ENCODE measurements at regions of chr11 and their contacts with region 1.

Region 1: GRCh38 chr11:75142714-75143419 is 8.0 kb upstream of the SLCO2B1 start:
- DNase-seq: peak; percentile 91 to 98 (median 97)
- H3K4me3 ChIP-seq: no peak overlapping the region
- H3K27ac ChIP-seq: no peak overlapping the region
- H3K4me1 ChIP-seq: peaks cover 4 to 29% (median 20%) of the 10 kb centered on the region in 4 experiments
- H3K27me3 ChIP-seq: peaks cover 0 to 4% (median 0%) of the 10 kb centered on the region in 5 experiments

Region 2: DNA sequence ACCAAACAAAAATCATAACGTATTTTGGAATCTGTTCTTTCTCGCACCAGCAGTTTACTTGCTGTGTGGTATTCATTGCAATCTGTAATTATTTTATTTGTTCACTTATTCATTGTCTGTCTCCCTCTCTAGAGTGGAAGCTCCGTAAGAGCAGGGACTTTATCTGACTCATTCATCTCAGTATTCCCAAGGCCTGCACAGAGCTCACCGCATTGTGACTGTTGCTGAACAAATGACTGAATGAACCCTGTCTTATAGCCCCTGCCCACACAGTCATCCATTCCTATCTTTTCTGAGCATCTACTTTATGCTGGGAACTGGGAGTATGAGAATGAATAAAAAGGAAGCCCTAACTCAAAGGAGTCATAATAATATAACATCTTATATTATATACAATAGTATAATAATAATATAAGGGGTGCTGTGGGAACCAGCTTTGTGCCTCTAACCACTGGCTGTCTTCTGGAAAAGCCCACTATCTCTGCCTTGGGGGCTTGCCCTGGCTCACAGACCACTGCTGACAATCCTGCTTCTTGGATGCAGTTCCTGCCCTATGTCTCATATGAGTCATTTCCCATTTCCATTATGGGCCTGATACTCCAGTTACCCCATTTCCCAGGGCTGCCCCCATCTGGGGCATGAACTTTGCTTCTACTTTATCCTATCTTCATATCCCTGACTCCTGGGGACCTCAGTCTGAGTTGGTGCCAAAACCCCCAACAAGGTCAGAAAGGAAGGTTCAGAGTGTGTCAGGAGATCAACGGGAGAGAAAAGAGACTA is 205.0 kb before region 1 on chr11:
- CTCF ChIA-PET with region 1: no interaction called
- POLR2A ChIA-PET with region 1: no interaction called
- DNase-seq: no peak
- H3K4me3 ChIP-seq: no peak overlapping the region
- H3K27ac ChIP-seq: no peak overlapping the region
- H3K4me1 ChIP-seq: no peaks in the 10 kb centered on the region
- H3K27me3 ChIP-seq: no peaks in the 10 kb centered on the region

Region 3: DNA sequence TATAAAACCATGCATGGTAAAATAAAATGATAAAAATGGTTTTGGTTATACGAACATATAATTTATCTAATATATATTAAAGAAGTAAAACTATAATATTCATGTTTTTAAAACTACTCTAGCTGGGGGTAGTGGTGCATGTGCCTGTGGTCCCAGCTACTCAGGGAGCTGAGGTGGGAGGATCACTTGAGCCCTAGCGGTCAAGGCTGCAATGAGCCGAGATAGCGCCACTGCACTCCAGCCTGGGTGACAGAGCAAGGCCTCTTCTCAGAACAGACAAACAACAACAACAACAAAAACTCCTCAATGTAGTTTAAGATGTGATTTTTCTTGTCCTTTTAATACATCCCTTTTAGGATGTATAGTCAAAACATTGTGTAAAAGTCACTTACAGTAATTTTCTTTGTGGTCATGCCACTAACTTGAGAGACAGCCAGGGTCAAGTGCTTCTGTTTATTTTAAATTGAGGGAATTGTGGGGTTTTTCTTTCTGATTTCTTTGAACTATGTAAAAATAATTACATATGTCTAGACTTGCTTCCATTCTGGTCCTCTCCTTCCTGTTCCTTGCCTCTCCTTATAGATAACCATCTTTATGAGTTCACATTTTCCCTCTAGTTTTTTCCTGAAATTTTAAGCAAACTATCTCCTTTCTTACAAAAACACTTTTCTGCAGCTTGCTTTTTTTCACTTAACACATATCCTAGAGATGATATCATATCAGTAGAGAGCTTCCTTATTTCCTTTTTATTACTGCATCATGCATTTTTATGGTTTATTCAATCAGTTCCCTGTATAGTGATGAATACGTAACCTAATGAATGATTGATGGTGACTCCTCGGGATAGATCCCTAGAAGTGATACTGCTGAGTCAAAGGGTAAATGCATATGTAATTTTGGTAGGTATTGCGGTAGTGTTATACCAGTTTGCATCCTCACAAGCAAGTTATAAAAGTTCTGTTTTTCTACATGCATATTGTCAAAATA is 55.3 kb before region 1 on chr11:
- CTCF ChIA-PET with region 1: no interaction called
- POLR2A ChIA-PET with region 1: no interaction called
- DNase-seq: no peak
- H3K4me3 ChIP-seq: no peak overlapping the region
- H3K27ac ChIP-seq: no peak overlapping the region
- H3K4me1 ChIP-seq: no peaks in the 10 kb centered on the region
- H3K27me3 ChIP-seq: no peaks in the 10 kb centered on the region

Region 4: GRCh38 chr11:75195121-75195551 is 52.3 kb after region 1 on chr11:
- CTCF ChIA-PET with region 1: interaction called, 309 read pairs
- POLR2A ChIA-PET with region 1: no interaction called
- DNase-seq: peak in 1 of 3 donors; percentile 13
- H3K4me3 ChIP-seq: no peak overlapping the region
- H3K27ac ChIP-seq: no peak overlapping the region
- H3K4me1 ChIP-seq: peaks cover 0 to 10% (median 3%) of the 10 kb centered on the region in 4 experiments
- H3K27me3 ChIP-seq: peaks cover 0 to 11% (median 2%) of the 10 kb centered on the region in 5 experiments

Region 5: GRCh38 chr11:75223954-75224643 is 81.2 kb after region 1 on chr11:
- CTCF ChIA-PET with region 1: interaction called, 14 read pairs
- POLR2A ChIA-PET with region 1: no interaction called
- DNase-seq: no peak
- H3K4me3 ChIP-seq: no peak overlapping the region
- H3K27ac ChIP-seq: no peak overlapping the region
- H3K4me1 ChIP-seq: peaks cover 0 to 2% (median 0%) of the 10 kb centered on the region in 4 experiments
- H3K27me3 ChIP-seq: peaks cover 0 to 3% (median 0%) of the 10 kb centered on the region in 5 experiments

Region 6: GRCh38 chr11:75248690-75249268 is 105.9 kb after region 1 on chr11:
- CTCF ChIA-PET with region 1: interaction called, 239 read pairs
- POLR2A ChIA-PET with region 1: no interaction called
- DNase-seq: peak; percentile 87 to 94 (median 90)
- H3K4me3 ChIP-seq: no peak overlapping the region
- H3K27ac ChIP-seq: no peak overlapping the region
- H3K4me1 ChIP-seq: no peaks in the 10 kb centered on the region
- H3K27me3 ChIP-seq: peaks cover 0 to 16% (median 11%) of the 10 kb centered on the region in 5 experiments

Measured in common myeloid progenitor, CD34-positive (primary cell).